Left cardiac atrium (tissue), 4 donors: ENCODE measurements at regions of chr17 and their contacts with region 1.

Region 1: GRCh38 chr17:72539981-72540897 is 419.4 kb downstream of the SOX9 start:
- DNase-seq: peak; percentile 69
- ATAC-seq: peak; percentile 97

Region 2: DNA sequence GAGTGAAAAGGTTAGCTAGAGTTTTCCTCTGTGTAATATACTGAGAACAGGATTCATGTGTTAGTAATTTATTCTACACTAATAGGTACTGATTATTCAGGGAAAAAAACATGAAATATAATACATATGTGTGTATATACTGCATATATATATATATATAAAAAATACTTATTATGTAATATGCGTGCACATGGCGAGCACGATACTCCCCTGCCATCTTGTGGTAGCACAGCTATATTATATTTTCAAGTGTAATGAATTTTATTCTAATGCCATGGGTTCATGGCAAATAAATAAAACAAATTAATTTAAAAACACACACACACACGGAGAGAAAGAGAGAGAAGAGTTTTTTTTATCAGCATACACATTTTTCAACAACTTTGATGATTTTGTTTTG is 1910.3 kb before region 1 on chr17:
- intact Hi-C with region 1: loop called in 1 of 2 experiments (anchors 5 kb)
- DNase-seq: no peak
- ATAC-seq: no peak

Region 3: GRCh38 chr17:70636517-70637133 is 1903.6 kb before region 1 on chr17:
- intact Hi-C with region 1: loop called (anchors 2 to 5 kb)
- DNase-seq: no peak
- ATAC-seq: no peak

Region 4: GRCh38 chr17:70767102-70767701 is 1773.0 kb before region 1 on chr17:
- intact Hi-C with region 1: loop called in 1 of 2 experiments (anchors 10 kb)
- DNase-seq: no peak
- ATAC-seq: no peak

Region 5: GRCh38 chr17:71118039-71118438 is 1422.2 kb before region 1 on chr17:
- intact Hi-C with region 1: loop called in 1 of 2 experiments (anchors 5 kb)
- DNase-seq: no peak
- ATAC-seq: no peak

Region 6: GRCh38 chr17:71472809-71473789 is 1067.1 kb before region 1 on chr17:
- intact Hi-C with region 1: loop called in 1 of 2 experiments (anchors 10 kb)
- DNase-seq: no peak
- ATAC-seq: peak in 1 of 2 donors; percentile 48

Region 7: GRCh38 chr17:72120642-72121163 is 419.5 kb before region 1 on chr17 and contains the start of gene SOX9:
- intact Hi-C with region 1: loop called in 1 of 2 experiments (anchors 10 kb)
- DNase-seq: peak; percentile 84
- ATAC-seq: peak; percentile 89 to 92
- total RNA-seq, gene SOX9: 12.4 to 16.3 TPM